AG04449 (cell line): ENCODE measurements at regions of chr18 and their contacts with region 1.

Region 1: DNA sequence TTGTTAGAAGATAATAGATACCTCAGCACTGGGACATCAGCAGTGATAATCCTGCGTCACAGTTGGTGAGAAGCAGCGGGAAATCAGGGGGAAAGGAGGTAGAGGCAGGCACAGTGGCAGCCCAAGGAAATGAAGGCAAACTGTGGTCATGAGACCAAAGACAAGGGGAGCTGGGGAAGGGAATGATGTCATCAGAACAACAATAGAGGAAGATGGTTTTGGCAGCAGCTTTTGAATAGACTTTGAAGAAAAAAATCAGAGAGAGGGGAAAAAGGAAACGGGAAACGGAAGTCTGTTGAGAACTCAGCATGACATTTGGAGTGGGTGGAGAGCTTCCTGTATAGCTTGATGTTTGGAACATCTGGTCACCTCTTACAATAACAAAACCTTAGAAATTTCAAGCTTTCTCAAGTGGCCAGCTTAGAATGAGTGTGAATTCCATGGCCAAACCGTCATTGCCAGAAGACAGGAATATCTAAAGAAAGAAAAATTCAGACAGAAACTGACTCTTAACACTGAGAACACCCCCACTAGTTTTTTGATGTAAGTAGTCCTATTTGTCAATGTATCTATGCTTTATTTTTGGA is 18.4 kb upstream of the YES1 start:
- DNase-seq: no peak
- H3K4me3 ChIP-seq: no peak overlapping the region
- CTCF ChIP-seq: no peak

Region 2: GRCh38 chr18:623761-624620 is 206.4 kb before region 1 on chr18:
- CTCF ChIA-PET with region 1: interaction called, 448 read pairs
- POLR2A ChIA-PET with region 1: no interaction called
- DNase-seq: peak; percentile 7
- H3K4me3 ChIP-seq: no peak overlapping the region
- CTCF ChIP-seq: peak; percentile 72

Region 3: GRCh38 chr18:658001-658946 is 172.1 kb before region 1 on chr18:
- CTCF ChIA-PET with region 1: interaction called, 12 read pairs
- POLR2A ChIA-PET with region 1: no interaction called
- DNase-seq: no peak
- H3K4me3 ChIP-seq: peak overlapping the region; percentile 89
- CTCF ChIP-seq: no peak

Region 4: DNA sequence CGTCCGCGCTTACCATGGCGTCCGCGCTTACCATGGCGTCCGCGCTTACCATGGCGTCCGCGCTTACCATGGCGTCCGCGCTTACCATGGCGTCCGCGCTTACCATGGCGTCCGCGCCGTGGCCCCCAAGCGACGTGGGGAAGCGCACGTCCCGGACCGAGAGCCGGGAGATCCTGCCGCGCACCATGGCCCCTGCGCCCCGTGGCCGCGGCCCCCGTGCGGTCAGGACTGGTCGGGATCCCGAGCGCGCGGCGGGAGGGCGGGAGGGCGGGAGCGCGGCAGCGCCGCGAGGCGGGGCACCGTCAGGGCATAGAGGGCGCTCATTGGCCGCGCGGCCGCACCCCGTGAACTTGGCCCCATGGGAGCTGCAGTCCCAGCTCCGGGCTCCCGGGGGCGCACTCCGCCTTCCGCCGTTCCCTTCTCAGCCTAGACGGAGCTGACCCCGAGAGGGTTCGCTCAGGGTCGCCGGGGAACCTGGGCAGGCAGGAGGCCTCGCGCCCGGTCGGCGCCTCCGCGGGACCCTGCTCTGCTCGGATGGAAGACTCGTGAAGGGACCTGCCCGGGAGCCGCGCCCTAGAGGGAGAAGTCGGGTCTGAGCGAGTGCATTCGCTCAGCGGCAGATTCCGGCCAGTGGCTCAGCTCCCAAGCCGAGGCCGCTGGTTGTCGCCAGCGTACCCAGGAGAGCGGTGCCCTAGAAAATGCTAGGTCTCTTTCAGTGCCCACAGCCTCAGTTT is 117.8 kb before region 1 on chr18 and contains the start of gene ENOSF1:
- CTCF ChIA-PET with region 1: interaction called, 40 read pairs
- POLR2A ChIA-PET with region 1: no interaction called
- DNase-seq: no peak
- H3K4me3 ChIP-seq: peak within 1 kb of the TSS; percentile 73
- CTCF ChIP-seq: peak; percentile 65

Region 5: DNA sequence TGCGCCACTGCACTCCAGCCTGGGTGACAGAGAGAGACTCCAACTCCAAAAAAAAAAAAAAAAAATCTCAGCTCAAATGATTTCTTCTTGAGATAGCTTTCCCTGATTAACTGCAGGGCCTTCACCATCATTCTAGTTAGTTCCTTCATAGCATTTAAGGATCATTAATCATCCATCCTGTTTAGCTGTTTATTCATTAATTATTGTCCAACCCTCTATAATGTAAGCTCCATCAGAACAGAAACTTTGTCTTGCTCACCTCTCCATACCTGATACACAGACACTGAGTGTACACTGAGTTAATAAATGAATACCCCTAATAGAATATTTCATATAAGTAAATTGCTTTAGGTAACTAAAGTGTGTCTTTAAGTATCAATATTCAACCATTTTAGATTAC is 75.7 kb before region 1 on chr18:
- CTCF ChIA-PET with region 1: interaction called, 20 read pairs
- POLR2A ChIA-PET with region 1: no interaction called
- DNase-seq: no peak
- H3K4me3 ChIP-seq: no peak overlapping the region
- CTCF ChIP-seq: no peak

Region 6: GRCh38 chr18:812376-813171 is 17.8 kb before region 1 on chr18:
- CTCF ChIA-PET with region 1: interaction called, 33 read pairs
- POLR2A ChIA-PET with region 1: no interaction called
- DNase-seq: no peak
- H3K4me3 ChIP-seq: peak overlapping the region; percentile 88
- CTCF ChIP-seq: no peak